Activated CD8-positive, alpha-beta T cell treated with anti-CD3 and anti-CD28 coated beads, Interleukin-2, amount 10 ng/mL, durations not matched to agents 7 days and 5 days (primary cell): ENCODE measurements at regions of chr18 and their contacts with region 1.

Region 1: DNA sequence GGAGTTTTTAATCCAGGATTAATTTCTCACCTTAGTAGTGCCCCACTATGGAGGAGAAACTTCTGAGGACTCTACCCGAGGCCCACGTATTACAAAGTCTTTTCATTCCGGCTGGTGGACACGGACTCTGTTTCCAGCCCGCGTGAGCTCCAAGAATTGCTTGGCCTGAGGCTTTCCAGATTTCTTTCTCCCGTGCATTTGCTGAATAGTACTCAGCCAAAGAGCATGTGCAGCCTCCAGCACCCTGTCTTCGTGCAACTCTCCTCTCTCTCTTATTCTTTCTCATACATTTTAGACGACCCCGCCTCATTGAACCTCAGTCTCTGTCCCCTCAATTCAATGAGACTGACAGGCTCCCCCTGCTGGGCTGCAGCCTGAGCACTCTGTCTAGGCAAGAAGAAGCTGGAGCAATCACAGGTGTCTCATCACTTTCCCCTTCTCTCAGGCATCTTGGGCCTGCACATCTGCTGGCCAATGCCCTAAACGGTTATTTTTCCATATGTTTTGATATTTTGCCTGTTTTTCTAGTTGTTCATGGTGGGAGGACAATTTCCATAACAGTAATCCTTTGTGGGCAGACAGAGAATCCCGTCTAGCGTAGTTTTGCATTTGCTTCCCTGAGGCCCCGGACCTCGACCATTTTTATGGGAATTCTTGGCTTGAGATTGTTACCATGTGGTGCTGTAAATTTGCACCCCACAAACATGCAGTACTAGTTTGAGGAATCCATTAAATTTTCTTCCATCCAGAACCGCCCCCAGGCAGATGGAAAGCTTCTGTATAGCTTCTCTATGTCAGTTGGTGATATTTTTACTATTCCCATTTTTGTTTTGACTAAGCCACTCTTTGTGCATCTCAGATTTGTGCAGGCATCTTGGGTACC is 50.1 kb upstream of the LPIN2 start:
- DNase-seq: peak; percentile 83
- ATAC-seq: peak; percentile 48
- H3K4me3 Mint-ChIP-seq: peak overlapping the region; percentile 17
- H3K27ac Mint-ChIP-seq: peak overlapping the region; percentile 95
- H3K4me1 Mint-ChIP-seq: peaks cover 67% of the 10 kb centered on the region
- H3K27me3 Mint-ChIP-seq: no peaks in the 10 kb centered on the region

Region 2: GRCh38 chr18:2797951-2798350 is 265.1 kb before region 1 on chr18:
- CTCF ChIA-PET with region 1: no interaction called
- POLR2A ChIA-PET with region 1: no interaction called
- DNase-seq: no peak
- ATAC-seq: no peak
- H3K4me3 Mint-ChIP-seq: no peak overlapping the region
- H3K27ac Mint-ChIP-seq: no peak overlapping the region
- H3K4me1 Mint-ChIP-seq: no peaks in the 10 kb centered on the region
- H3K27me3 Mint-ChIP-seq: no peaks in the 10 kb centered on the region

Region 3: DNA sequence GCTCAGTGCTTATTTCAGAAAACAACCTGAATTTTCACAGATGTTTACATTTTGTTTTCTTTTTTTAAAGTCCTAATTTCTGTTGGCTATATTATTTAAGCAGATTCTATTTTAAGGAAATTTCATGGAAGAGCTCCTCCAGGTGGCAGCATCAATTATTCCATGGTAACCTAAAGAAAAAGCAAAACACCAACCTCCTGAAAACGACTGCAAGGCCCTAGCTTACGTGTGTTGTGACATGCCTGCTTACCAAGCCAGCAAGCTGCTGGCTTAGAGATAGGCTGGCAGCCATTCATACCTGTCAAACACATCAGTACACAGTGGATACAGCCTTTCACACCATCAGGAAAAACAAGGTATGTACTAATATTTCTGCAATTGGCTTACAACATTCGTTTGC is 115.0 kb before region 1 on chr18:
- CTCF ChIA-PET with region 1: interaction called, 11 read pairs
- POLR2A ChIA-PET with region 1: no interaction called
- DNase-seq: no peak
- ATAC-seq: no peak
- H3K4me3 Mint-ChIP-seq: no peak overlapping the region
- H3K27ac Mint-ChIP-seq: no peak overlapping the region
- H3K4me1 Mint-ChIP-seq: peaks cover 30% of the 10 kb centered on the region
- H3K27me3 Mint-ChIP-seq: no peaks in the 10 kb centered on the region

Region 4: DNA sequence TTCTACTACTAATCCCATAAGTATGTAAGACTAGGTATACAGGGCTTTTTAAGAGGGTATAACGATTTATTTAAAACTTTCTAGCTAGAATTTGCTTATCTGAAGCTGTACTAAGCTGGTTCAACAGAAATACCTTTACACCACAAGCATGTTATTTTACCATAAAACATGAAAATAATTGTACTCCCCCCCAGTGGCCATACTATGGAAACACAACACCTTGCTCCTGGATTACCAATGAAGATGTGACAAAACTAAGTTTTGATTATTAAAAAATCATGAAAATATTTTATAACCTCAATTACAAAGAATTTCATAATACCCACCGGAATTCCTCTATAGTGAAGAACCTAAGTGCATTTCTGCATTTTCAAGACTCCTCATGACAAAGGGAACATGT is 77.4 kb before region 1 on chr18:
- CTCF ChIA-PET with region 1: interaction called, 70 read pairs
- POLR2A ChIA-PET with region 1: interaction called, 7 read pairs
- DNase-seq: no peak
- ATAC-seq: peak; percentile 36
- H3K4me3 Mint-ChIP-seq: no peak overlapping the region
- H3K27ac Mint-ChIP-seq: no peak overlapping the region
- H3K4me1 Mint-ChIP-seq: peaks cover 66% of the 10 kb centered on the region
- H3K27me3 Mint-ChIP-seq: no peaks in the 10 kb centered on the region

Region 5: DNA sequence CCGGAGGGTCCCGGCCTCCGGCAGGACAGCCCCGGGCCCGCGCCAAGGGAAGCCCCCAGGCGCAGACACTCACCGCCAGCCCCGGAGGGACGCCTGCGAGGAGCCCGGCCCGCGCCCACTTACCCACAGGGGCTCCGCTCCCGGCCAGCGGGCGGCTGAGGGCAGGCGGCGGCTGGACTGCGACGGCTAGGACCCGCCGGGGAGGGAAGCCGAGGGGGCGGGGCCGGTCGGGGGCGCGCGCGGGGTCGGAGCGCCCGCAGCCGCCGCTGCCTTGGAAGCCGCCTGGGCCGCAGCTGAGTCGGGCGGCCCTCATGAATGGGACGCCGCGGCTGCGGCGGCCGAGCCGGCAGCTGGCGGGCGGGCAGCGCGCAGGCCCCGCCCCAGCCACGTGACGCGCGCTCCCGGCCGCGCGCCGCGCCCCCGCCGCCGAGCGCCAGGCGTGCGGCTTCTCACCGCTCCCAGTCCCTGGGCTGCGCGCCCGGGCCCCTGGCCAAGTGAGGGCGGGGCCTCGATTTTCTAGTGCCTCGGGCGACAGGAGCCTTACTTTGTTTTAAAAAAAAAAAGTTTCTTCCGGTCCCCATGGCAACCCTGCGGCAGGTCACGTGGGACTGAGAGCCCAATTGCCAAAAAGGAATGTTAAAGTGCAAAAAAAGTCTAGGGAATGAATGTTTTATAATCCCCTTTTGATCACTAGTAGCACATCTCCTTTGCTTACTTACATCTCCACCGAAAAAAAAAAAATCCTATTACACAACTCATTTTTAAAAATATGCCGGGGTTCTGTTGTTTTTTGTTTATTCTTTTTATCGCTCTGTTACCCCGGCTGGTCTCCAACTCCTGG is 49.9 kb before region 1 on chr18 and contains the start of gene LPIN2:
- CTCF ChIA-PET with region 1: interaction called, 60 read pairs
- POLR2A ChIA-PET with region 1: interaction called, 25 read pairs
- DNase-seq: peak; percentile 97
- ATAC-seq: peak; percentile 93
- H3K4me3 Mint-ChIP-seq: peak within 1 kb of the TSS; percentile 87
- H3K27ac Mint-ChIP-seq: peak within 1 kb of the TSS; percentile 90
- H3K4me1 Mint-ChIP-seq: peaks cover 66% of the 10 kb centered on the region
- H3K27me3 Mint-ChIP-seq: no peaks in the 10 kb centered on the region
- total RNA-seq, gene LPIN2: 77.5 TPM

Region 6: GRCh38 chr18:3074087-3074486 is 11.0 kb after region 1 on chr18:
- CTCF ChIA-PET with region 1: interaction called, 67 read pairs
- POLR2A ChIA-PET with region 1: interaction called, 3 read pairs
- DNase-seq: no peak
- ATAC-seq: no peak
- H3K4me3 Mint-ChIP-seq: no peak overlapping the region
- H3K27ac Mint-ChIP-seq: no peak overlapping the region
- H3K4me1 Mint-ChIP-seq: peaks cover 23% of the 10 kb centered on the region
- H3K27me3 Mint-ChIP-seq: no peaks in the 10 kb centered on the region

Region 7: DNA sequence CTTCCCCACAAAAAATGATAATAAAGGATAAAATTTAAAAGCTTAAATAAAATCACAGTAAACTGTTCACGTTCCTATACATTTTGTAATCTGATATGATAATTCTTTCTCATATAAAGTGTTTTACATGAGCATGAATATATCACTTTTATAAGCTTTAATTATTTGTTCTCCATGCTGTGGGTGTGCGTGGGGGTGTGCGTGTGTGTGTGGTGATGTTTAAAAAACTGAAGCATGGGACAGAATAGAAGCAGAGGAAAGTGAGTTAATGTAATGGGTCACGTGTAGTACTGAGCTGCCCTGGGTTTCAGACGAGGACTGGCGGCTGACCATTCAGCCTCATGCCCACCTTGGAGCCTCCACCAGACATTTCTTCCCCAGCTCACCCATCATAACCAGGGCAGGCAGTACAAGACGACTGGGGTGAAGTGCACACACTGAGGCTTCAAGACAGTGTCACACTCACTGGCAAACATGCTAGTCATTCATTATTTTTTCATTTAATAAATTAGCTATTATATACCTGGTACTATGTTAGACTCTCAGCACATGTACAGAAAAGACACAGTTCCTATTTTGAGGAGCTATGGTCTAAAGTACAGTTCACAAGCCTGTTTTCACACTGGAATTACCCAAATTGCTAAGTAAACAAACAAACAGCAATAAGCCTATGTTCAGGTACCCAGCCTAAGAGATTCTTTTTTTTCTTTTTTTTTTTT is 47.2 kb after region 1 on chr18:
- CTCF ChIA-PET with region 1: interaction called, 11 read pairs
- POLR2A ChIA-PET with region 1: no interaction called
- DNase-seq: no peak
- ATAC-seq: no peak
- H3K4me3 Mint-ChIP-seq: no peak overlapping the region
- H3K27ac Mint-ChIP-seq: no peak overlapping the region
- H3K4me1 Mint-ChIP-seq: no peaks in the 10 kb centered on the region
- H3K27me3 Mint-ChIP-seq: no peaks in the 10 kb centered on the region

Region 8: DNA sequence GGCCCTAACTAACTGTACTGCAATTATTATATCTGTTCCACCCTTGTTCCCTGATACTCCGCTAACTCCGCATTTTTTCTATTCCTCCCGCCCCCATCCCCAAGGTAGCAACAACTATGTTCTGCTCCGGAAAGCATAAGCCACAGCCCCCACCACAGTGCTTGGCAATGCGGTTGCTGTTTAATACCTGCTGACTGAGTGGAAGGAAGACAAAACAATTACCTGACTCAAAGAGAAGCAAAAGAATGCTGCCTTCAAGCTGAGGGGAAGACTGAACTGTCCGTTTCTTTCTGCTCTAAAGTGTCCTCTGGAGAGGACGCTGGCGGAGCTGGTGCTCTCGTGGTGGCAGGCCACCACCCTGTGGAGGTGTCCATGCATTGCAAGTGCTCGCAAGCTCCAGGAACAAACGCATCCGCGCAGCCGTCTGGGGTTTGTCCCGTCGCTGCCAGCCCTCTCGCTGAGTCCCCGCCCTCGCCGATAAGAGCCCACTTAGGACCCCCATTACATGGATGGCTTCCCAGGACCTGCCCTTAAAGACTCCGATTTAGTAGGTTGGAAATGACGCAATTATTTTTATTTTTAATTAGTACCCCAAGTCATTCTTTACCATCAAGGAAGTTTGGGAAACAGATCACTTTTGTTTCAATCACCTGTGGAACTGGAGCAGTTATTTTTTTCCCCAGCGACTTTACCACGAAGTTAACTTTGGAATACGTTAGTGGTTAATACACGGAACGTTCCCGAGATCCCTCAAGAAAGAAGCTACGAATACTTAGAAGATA is 183.0 kb after region 1 on chr18:
- CTCF ChIA-PET with region 1: interaction called, 81 read pairs
- POLR2A ChIA-PET with region 1: interaction called, 49 read pairs
- DNase-seq: peak; percentile 89
- ATAC-seq: peak; percentile 52
- H3K4me3 Mint-ChIP-seq: peak overlapping the region; percentile 82
- H3K27ac Mint-ChIP-seq: peak overlapping the region; percentile 100
- H3K4me1 Mint-ChIP-seq: peaks cover 23% of the 10 kb centered on the region
- H3K27me3 Mint-ChIP-seq: no peaks in the 10 kb centered on the region

Region 9: DNA sequence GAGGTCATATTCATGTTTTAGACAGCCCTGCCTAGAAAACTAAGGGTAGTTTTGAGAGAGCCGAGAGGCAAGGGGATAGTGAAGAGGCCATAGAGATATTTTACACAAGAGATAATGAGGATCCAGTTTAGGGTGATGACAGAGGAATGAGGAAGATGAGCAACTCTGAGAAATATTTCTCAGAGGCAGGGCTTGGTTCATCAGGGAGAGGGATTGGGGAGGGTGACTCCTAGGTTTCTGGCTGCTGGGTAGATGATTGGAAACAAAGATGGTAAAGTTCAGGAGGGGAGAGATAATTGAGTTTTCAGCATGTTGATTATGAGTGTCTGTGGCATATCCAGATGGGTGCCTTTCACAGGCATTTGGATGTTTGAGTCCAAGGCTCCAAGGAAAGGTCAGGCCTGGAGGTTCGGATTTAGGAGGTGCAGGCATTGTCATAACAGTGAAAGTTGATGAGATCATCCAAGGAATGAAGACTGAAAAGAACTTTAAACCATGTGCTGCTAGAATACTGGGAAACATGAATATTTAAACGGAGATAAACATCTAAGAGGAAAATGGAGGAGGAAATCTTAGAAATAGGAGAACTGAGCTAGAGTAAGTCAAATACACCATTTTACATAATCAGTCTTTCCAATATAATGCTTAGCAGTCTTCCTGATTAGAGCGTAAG is 206.3 kb after region 1 on chr18:
- CTCF ChIA-PET with region 1: no interaction called
- POLR2A ChIA-PET with region 1: no interaction called
- DNase-seq: no peak
- ATAC-seq: no peak
- H3K4me3 Mint-ChIP-seq: no peak overlapping the region
- H3K27ac Mint-ChIP-seq: no peak overlapping the region
- H3K4me1 Mint-ChIP-seq: peaks cover 58% of the 10 kb centered on the region
- H3K27me3 Mint-ChIP-seq: no peaks in the 10 kb centered on the region